Tibial artery (tissue), 4 donors: ENCODE measurements at regions of chr10 and their contacts with region 1.

Region 1: DNA sequence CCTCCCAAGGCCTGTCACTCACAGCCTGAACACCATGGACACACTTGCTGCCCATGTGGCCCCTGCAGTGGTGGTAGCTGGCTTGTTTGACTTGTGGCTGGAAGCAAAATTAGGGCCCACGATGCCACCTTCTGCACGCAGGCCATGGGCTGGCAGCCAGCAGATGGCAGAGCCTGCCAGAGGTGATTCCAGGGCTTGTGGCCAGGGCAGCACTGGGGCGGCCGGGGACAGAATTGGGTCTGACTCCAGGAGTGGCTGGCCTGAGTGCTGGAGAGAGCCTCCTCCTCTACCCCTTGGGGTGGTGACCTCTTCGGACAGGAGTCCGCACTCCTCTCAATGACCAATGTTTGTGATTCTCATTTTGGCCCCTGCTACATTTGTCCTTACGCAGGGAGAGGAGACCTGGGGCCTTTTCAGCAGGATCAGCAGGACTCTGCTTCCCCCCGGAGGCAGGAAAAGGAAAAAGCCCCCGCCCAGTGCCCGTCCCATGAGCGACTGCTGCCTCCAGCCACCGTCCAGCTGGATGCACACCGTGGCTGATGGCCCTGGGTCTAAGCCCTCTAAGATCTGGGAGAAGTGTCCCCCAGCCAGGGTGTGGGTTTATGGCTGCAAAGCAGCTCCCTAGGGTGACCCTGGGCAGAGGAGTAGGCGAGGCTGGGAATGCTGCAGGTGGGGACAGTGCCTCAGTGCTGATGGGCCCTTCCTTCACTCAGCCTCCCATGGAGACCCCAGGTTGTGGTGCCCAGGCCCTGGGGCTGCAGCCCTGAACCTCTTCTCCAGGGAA is 26.5 kb downstream of the DNAJB12 start:
- DNase-seq: peak; percentile 72 to 91
- H3K4me3 ChIP-seq: no peak overlapping the region
- H3K27ac ChIP-seq: peak overlapping the region; percentile 45 to 64
- H3K4me1 ChIP-seq: peaks cover 0 to 73% (median 66%) of the 10 kb centered on the region in 4 donors
- H3K27me3 ChIP-seq: no peaks in the 10 kb centered on the region
- CTCF ChIP-seq: peak; percentile 59 to 69

Region 2: DNA sequence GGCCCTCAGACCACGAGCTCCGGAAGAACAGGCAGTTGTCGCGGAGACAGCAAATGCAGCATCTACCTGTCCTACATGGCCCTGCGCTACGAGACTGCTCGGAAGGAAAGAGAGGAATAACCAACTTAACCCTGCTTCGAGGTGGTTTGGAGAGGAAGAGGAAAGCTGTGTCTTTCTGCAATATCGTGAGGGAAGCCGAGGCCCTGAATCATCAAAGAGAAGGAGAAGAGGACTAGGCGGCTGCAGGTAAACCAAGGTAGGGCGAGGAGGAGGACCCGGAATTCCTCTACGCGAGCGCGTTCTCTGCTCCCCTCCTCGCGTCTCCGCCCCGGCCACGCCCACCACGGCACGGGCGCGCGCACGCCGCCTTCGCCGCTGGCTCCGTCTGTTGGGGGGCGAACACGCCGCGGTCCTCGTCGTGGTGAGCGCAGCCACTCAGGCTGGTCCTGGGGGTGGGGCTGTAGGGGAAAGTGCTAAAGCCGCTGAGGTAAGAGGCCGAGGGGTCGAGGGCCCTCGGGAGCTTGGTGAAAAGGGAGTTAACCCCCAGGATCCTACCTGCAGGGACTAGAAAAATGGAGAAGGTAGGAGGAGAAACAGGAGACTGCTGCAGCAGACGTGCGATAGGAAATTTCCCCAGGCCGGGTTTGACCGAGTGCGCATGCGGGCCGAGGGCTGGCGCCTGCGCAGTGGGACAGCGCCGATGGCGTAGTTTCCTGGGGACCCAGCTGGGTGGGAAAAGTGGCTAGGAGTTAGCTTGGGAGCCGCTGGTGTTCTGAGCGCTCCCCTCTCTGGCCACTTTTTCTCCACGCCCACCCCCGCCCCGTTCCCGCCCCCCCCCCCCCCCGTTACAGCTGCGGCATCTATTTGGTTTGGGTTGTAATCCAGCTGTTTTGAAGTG is 112.3 kb before region 1 on chr10 and contains the starts of genes ANAPC16 and ASCC1:
- intact Hi-C with region 1: loop called (anchors 2 kb)
- DNase-seq: peak; percentile 87 to 96
- H3K4me3 ChIP-seq: peak within 1 kb of the TSS; percentile 68 to 78
- H3K27ac ChIP-seq: peak within 1 kb of the TSS; percentile 92 to 94
- H3K4me1 ChIP-seq: peaks cover 0 to 60% (median 22%) of the 10 kb centered on the region in 4 donors
- H3K27me3 ChIP-seq: no peaks in the 10 kb centered on the region
- CTCF ChIP-seq: no peak